K562 (cell line): ENCODE measurements at regions of chrX and their contacts with region 1.

Region 1: DNA sequence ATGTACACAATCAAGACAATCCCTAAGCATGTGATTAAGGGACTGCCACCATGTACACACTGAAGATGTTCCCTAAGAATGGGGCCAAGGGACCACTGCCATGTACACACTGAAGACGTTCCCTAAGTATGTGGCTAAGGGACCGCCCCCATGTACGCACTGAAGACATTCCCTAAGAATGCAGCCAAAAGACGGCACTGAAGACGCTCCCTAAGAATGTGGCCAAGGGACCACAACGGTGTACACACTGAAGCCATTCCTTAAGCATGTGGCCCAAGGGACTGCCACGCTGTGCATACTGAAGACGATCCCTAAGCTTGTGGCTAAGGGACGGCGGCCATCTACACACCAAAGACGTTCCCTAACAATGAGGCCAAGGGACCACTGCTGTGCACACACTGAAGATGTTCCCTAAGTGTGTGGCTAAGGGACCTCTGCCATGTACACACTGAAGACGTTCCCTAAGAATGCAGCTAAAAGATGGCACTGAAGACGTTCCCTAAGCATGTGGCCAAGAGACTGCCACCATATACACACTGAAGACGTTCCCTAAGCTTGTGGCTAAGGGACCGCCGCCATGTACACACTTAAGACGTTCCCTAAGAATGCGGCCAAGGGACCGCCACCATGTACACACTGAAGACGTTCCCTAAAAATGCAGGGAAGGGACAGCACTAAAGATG is 26.4 kb downstream of the DHRSX start:
- DNase-seq: peak in 3 of 4 experiments; percentile 20 to 85 (median 32)
- ATAC-seq: peak; percentile 79
- H3K4me3 ChIP-seq: peak overlapping the region; percentile 21
- H3K27ac ChIP-seq: peak overlapping the region; percentile 84
- H3K4me1 ChIP-seq: peaks cover 0 to 13% of the 10 kb centered on the region in 2 experiments; a peak in 3 of 5 replicates
- H3K27me3 ChIP-seq: no peaks in the 10 kb centered on the region
- CTCF ChIP-seq: no peak
- EP300 ChIP-seq: no peak
- POLR2A ChIP-seq: no peak
- RAD21 ChIP-seq: no peak

Region 2: GRCh38 chrX:2451501-2452316 is 22.7 kb before region 1 on chrX:
- CTCF ChIA-PET with region 1: no interaction called
- POLR2A ChIA-PET with region 1: no interaction called
- in situ Hi-C with region 1: no loop called
- intact Hi-C with region 1: loop called (anchors 1 kb)
- DNase-seq: peak; percentile 20 to 85 (median 35)
- ATAC-seq: peak; percentile 85
- H3K4me3 ChIP-seq: peak overlapping the region; percentile 23
- H3K27ac ChIP-seq: peak overlapping the region; percentile 92
- H3K4me1 ChIP-seq: no peaks in the 10 kb centered on the region; a peak in 3 of 5 replicates
- H3K27me3 ChIP-seq: no peaks in the 10 kb centered on the region
- CTCF ChIP-seq: no peak
- EP300 ChIP-seq: no peak
- POLR2A ChIP-seq: no peak
- RAD21 ChIP-seq: peak in 1 of 2 experiments; percentile 41; a peak in 2 of 4 replicates

Region 3: GRCh38 chrX:2457289-2458133 is 16.9 kb before region 1 on chrX:
- CTCF ChIA-PET with region 1: no interaction called
- POLR2A ChIA-PET with region 1: no interaction called
- in situ Hi-C with region 1: no loop called
- intact Hi-C with region 1: loop called (anchors 1 kb)
- DNase-seq: peak; percentile 39 to 95 (median 50)
- ATAC-seq: peak; percentile 86
- H3K4me3 ChIP-seq: peak overlapping the region; percentile 44
- H3K27ac ChIP-seq: peak overlapping the region; percentile 95
- H3K4me1 ChIP-seq: no peaks in the 10 kb centered on the region; a peak in 2 of 5 replicates
- H3K27me3 ChIP-seq: no peaks in the 10 kb centered on the region
- CTCF ChIP-seq: no peak
- EP300 ChIP-seq: 0 out of 2 replicates have a peak, but pooled peaks have one; percentile 8
- POLR2A ChIP-seq: no peak
- RAD21 ChIP-seq: peak in 1 of 2 experiments; percentile 47; a peak in 2 of 4 replicates

Region 4: GRCh38 chrX:2507904-2508627 is 33.6 kb after region 1 on chrX:
- CTCF ChIA-PET with region 1: no interaction called
- POLR2A ChIA-PET with region 1: no interaction called
- in situ Hi-C with region 1: no loop called
- intact Hi-C with region 1: no loop called
- DNase-seq: no peak
- ATAC-seq: no peak
- H3K4me3 ChIP-seq: no peak overlapping the region
- H3K27ac ChIP-seq: no peak overlapping the region
- H3K4me1 ChIP-seq: peaks cover 0 to 2% of the 10 kb centered on the region in 2 experiments; a peak in 2 of 5 replicates
- H3K27me3 ChIP-seq: no peaks in the 10 kb centered on the region; a peak in 1 of 5 replicates
- CTCF ChIP-seq: no peak
- EP300 ChIP-seq: no peak
- POLR2A ChIP-seq: no peak
- RAD21 ChIP-seq: no peak

Region 5: DNA sequence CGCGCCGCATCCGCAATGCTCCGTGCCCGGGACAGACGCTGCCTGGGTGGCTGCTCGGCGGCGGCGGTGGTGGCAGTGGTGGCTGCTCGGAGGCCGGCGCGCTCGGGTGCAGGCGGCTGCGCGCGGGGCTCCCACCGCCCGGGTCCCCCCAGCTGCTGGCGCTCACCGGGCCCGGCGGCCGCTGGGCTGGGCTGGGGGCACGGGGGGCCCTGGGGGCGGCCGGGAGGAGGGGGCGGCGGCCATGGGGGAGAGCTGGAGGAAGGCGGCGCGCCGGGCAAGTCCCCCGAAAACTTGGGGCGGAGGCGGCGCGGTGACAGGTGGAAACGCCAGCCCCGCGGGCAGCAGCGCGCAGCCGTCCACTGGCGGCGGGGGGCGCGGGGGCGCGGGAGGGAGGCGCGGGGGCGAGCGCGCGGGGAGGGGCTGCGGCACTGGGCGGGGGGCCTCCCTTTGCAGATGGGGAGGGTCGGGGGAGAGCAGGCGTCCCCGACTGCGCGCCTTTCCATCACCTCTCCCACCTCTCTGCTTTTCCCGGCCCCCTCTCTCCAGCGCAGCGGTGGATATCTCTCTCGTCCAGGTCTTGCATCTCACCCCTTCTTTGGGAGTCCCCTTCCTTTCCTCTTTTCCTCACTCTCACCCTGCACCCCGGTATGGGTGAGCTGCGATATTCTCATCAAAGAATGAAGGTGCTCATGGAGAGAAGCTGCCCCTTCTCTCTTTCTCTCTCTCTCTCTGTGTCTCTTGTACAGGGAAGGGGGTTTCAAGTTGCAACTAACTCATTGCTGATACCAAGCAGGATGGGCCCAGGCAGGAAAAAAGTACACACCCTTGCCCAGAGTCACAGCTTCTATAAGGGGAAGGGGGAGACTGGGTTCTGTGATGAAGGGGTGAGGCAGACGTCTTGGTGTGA is 110.1 kb after region 1 on chrX:
- CTCF ChIA-PET with region 1: no interaction called
- POLR2A ChIA-PET with region 1: no interaction called
- in situ Hi-C with region 1: loop called (anchors 5 kb)
- intact Hi-C with region 1: no loop called
- DNase-seq: no peak
- ATAC-seq: no peak
- H3K4me3 ChIP-seq: no peak overlapping the region
- H3K27ac ChIP-seq: no peak overlapping the region
- H3K4me1 ChIP-seq: no peaks in the 10 kb centered on the region
- H3K27me3 ChIP-seq: peaks cover 2 to 35% of the 10 kb centered on the region in 2 experiments; a peak in 3 of 5 replicates
- CTCF ChIP-seq: no peak
- EP300 ChIP-seq: no peak
- POLR2A ChIP-seq: no peak
- RAD21 ChIP-seq: no peak

Region 6: GRCh38 chrX:2595258-2595657 is 120.8 kb after region 1 on chrX:
- CTCF ChIA-PET with region 1: no interaction called
- POLR2A ChIA-PET with region 1: no interaction called
- in situ Hi-C with region 1: no loop called
- intact Hi-C with region 1: loop called (anchors 2 kb)
- DNase-seq: no peak
- ATAC-seq: no peak
- H3K4me3 ChIP-seq: no peak overlapping the region
- H3K27ac ChIP-seq: no peak overlapping the region
- H3K4me1 ChIP-seq: no peaks in the 10 kb centered on the region
- H3K27me3 ChIP-seq: no peaks in the 10 kb centered on the region
- CTCF ChIP-seq: no peak
- EP300 ChIP-seq: no peak
- POLR2A ChIP-seq: no peak
- RAD21 ChIP-seq: no peak